AG04449 (cell line): ENCODE measurements at regions of chr2 and their contacts with region 1.

Region 1: GRCh38 chr2:96801005-96801785 is 14.9 kb upstream of the CNNM3 start:
- DNase-seq: no peak
- H3K4me3 ChIP-seq: no peak overlapping the region
- CTCF ChIP-seq: peak; percentile 93

Region 2: DNA sequence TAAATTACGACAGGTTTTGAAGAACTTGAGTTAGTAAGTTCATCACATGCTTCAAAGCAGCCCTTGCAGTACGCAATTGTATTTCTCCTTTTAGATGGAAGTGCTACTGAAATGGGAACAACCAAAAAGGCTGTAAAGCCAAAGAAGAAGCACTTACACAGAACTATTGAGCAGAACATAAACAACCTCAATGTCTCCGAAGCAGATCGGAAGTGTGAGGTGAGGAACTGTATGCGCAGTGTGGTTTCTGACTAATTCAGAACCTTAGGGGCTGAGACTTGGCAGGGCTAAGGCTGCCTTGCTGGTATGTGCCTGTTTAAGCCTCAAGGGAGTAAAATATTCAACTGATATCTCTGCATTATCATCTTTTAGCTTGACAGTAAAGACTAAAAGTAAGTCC is 457.2 kb before region 1 on chr2:
- CTCF ChIA-PET with region 1: no interaction called
- POLR2A ChIA-PET with region 1: no interaction called
- DNase-seq: no peak
- H3K4me3 ChIP-seq: no peak overlapping the region
- CTCF ChIP-seq: no peak

Region 3: DNA sequence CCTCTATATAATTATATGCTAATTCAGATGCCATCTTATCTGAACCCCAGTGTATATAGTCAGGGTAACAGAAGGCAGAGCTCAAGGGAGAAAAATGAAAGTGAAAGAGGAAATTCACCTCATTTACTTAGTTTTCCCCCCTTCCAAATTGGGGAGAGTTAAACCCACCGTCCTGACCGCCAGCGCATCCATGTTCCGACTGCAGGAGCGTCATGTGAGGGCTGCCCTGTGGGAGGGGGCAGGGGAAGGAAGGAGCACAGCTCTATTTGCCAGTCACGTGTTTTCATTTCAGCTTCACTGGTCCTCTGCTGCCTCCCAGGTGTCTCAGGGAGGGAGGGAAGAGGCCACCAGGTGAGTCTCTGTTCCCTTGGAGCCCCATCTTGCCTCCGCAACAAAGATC is 27.3 kb before region 1 on chr2:
- CTCF ChIA-PET with region 1: interaction called, 13 read pairs
- POLR2A ChIA-PET with region 1: no interaction called
- DNase-seq: no peak
- H3K4me3 ChIP-seq: no peak overlapping the region
- CTCF ChIP-seq: no peak

Region 4: DNA sequence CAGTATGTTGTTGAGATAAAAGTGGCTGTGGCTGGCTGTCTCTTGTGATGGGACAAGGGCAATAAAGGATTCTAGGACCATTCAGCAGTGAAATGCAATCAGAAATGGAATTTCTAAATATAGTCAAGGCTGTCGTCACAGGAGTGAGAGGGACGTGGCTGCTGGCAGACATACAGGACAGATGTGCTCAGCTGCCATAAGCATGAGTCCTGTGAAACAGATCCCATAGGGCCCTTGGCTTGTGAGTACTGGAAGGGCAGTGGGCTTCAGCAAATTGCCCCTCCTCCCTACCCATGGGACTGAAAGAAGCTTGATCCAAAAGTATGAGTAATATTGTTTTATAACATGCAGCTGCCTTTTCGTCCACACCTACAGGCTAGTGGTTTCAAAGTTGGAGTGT is 10.7 kb after region 1 on chr2:
- CTCF ChIA-PET with region 1: interaction called, 20 read pairs
- POLR2A ChIA-PET with region 1: no interaction called
- DNase-seq: no peak
- H3K4me3 ChIP-seq: no peak overlapping the region
- CTCF ChIP-seq: no peak

Region 5: DNA sequence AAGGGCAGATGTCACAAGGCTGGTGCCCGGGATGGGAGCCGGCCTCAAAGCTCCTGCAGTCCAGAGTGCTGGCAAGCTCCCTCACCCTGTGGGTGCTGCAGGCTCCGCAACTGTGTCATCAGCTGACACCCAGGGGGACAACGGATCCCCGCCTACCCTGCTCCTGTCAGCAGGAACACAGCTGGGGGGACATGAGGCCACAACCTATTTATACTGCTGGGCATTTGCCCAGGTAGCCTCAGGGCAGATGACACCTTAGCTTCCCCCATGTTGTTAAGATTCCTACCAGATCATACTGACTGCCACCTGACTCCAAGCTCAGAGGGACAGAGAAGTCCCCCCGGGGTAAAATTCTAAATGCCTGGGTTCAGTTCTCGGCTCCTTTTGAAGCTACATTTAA is 41.4 kb after region 1 on chr2:
- CTCF ChIA-PET with region 1: no interaction called
- POLR2A ChIA-PET with region 1: no interaction called
- DNase-seq: no peak
- H3K4me3 ChIP-seq: no peak overlapping the region
- CTCF ChIP-seq: no peak

Region 6: DNA sequence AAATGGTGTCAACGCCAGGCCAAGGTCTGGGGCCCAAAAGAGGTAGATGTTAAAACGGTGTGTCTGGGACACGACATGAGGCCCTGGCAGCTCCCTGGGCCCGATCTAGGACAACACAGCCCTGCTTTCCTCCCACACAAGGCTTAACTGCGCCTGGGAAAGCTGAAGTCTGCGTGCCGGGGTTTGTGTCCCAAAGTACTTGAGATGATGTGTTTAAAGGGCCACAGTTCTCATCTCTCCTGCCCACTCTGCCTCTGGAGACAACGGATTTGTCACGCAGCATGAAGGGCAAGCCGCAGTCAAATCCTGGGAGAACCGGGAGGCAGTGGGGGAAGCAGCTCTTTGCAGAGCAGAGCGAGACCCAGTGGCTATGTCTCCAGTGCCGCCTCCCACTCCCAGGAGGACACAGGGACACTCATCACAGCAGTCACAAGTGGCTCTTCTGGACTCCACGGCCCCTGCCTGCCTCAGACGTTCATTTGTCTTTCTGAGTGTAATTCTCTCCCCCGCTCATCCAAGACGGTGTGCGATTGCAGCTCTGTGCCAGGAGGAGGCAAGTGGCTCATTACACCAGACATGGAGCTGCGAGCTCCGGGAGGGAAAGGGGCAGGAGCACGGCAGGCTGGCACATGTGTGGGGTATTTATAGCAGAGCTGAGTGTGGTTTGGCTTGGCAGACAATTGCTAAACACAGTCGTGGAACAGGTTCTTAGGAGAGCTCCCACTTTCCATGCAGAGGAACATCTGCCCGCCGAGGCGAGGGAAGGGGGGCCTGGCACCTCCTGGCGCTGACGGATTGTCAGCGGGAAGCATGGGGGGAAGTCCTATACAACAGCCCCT is 126.4 kb after region 1 on chr2:
- CTCF ChIA-PET with region 1: no interaction called
- POLR2A ChIA-PET with region 1: no interaction called
- DNase-seq: no peak
- H3K4me3 ChIP-seq: no peak overlapping the region; the same call in 1 of the 2 replicates
- CTCF ChIP-seq: peak; percentile 23